ENCODE measurements at regions of chr17 and their contacts with region 1.

Region 1: DNA sequence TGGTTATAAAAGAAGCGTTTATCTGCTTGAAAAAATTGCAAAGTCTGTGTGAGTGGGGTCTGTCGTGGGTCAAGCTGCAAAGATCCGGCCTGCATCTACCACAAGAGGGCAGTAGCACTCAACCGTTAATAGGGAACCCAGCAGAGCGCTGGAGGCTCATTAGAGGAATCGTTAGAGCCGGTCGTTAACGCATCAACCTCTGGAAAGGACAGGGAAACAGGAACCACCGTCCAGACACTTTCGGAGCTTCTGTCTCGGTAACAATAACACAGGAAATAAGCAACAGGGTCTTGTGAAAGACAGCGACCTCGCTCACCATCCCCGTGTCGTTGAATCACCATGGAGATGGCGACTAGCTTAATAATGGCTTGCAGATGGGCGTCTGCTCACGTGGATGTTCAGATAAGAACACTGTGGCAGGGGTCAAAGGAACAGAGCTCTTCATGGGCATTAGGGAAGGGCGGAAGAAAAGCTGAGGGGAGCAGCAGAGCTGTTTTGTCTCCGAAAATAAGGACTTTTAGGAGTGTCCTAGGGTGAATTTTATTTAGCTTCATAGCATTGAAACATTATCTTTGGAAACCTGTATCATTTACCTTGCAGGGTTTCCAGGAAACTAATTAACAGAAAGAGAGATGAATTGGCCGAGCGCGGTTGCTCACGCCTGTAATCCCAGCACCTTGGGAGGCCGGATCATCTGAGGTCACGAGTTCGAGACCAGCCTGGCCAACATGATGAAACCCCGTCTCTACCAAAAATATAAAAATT is 11.9 kb upstream of the NSRP1 start:
- DNase-seq: peak; percentile 85
- H3K4me3 ChIP-seq: peak overlapping the region in 2 of 3 experiments; percentile 24 to 57
- H3K27ac ChIP-seq: no peak overlapping the region
- H3K4me1 ChIP-seq: peaks cover 5% of the 10 kb centered on the region
- H3K27me3 ChIP-seq: no peaks in the 10 kb centered on the region
- CTCF ChIP-seq: peak; percentile 88 to 96
- POLR2A ChIP-seq: no peak

Region 2: GRCh38 chr17:30093463-30094147 is 11.2 kb before region 1 on chr17:
- CTCF ChIA-PET with region 1: interaction called, 39 read pairs
- POLR2A ChIA-PET with region 1: no interaction called
- dilution Hi-C with region 1: no loop called
- intact Hi-C with region 1: no loop called
- DNase-seq: peak; percentile 72
- H3K4me3 ChIP-seq: no peak overlapping the region
- H3K27ac ChIP-seq: no peak overlapping the region
- H3K4me1 ChIP-seq: no peaks in the 10 kb centered on the region
- H3K27me3 ChIP-seq: no peaks in the 10 kb centered on the region
- CTCF ChIP-seq: peak; percentile 52 to 80
- POLR2A ChIP-seq: no peak

Region 3: GRCh38 chr17:30124273-30124796 is 19.6 kb after region 1 on chr17:
- CTCF ChIA-PET with region 1: interaction called, 50 read pairs
- POLR2A ChIA-PET with region 1: no interaction called
- dilution Hi-C with region 1: no loop called
- intact Hi-C with region 1: no loop called
- DNase-seq: no peak
- H3K4me3 ChIP-seq: no peak overlapping the region
- H3K27ac ChIP-seq: no peak overlapping the region
- H3K4me1 ChIP-seq: peaks cover 4% of the 10 kb centered on the region
- H3K27me3 ChIP-seq: no peaks in the 10 kb centered on the region
- CTCF ChIP-seq: no peak
- POLR2A ChIP-seq: no peak

Region 4: DNA sequence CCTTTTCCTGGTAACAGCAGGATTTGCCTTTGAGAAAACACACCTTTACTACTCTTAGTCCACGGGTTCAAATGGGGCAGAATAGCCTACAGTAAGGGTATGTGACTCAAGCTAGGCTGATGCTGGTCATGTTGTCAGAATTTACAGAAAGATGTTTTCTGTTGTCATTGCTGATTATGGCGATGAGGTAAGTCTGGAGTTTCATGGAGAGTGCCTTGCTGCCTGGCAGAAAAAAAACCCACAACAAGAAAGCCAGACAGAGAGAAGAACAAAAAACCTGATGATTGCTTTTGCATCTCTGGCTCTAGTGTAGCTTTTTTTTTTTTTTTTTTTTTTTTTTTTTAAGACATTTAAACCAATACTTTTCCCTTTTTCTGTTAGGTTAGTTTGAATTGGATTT is 82.8 kb after region 1 on chr17:
- CTCF ChIA-PET with region 1: interaction called, 13 read pairs
- POLR2A ChIA-PET with region 1: no interaction called
- dilution Hi-C with region 1: no loop called
- intact Hi-C with region 1: no loop called
- DNase-seq: no peak
- H3K4me3 ChIP-seq: no peak overlapping the region
- H3K27ac ChIP-seq: no peak overlapping the region
- H3K4me1 ChIP-seq: no peaks in the 10 kb centered on the region
- H3K27me3 ChIP-seq: no peaks in the 10 kb centered on the region
- CTCF ChIP-seq: no peak
- POLR2A ChIP-seq: no peak

Region 5: DNA sequence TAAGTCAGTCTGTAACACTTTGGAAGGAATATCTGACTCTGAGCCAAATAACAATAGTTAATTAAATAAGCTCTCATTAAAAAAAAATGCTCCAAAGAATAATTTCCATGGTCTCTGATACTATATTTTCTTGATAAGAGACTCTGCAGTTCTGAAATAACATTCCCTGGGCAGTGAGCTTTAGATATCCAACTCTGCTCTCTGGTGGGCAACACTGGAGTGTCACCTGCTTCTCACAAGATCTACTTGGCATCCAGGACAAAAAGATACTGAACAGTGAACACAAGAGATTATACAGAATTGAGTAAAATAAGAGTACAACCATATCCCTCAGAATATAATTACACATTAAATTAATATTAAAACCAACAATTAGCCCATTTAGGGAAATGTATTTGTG is 173.3 kb after region 1 on chr17:
- CTCF ChIA-PET with region 1: interaction called, 73 read pairs
- POLR2A ChIA-PET with region 1: no interaction called
- dilution Hi-C with region 1: no loop called
- intact Hi-C with region 1: loop called (anchors 1 kb)
- DNase-seq: peak; percentile 85
- H3K4me3 ChIP-seq: no peak overlapping the region
- H3K27ac ChIP-seq: no peak overlapping the region
- H3K4me1 ChIP-seq: no peaks in the 10 kb centered on the region
- H3K27me3 ChIP-seq: no peaks in the 10 kb centered on the region
- CTCF ChIP-seq: peak; percentile 46 to 55
- POLR2A ChIP-seq: no peak

Region 6: DNA sequence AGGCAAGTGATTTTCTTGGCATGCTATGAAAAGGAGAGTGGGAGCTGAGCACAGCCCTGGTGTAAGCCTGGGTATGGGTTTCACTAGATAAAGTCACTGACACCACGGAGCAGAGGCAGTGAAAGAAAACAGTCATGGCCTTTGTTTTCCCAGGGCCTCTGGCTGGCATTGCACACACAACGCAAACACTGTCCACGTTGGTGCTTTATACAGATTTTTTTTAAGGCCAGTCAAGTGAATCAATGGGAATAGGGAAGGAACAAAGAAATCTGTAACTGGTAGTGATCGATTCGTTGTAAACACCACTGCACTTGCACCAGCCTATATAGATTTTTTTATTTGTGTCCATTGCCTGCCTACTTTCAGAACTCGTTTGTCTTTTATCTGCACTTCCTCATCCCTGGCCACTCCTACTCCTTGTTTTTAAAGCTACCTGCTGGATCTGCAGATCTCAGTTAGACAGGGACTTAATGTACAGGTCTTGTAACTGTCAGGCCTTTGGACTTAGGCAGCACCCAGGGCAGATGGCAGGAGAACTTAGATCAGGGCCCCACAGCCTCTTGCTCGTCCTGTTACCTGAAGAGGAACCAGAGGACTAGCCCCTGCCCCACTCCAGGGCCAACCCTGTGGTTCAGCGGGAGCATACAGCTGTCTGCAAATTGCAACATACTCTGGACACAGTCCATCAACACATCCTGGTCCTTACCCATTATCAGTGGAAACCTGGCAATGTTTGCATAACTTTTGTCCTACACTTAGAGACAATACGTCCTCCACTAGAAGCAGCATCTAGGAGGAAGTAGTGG is 239.7 kb after region 1 on chr17:
- CTCF ChIA-PET with region 1: interaction called, 25 read pairs
- POLR2A ChIA-PET with region 1: no interaction called
- dilution Hi-C with region 1: no loop called
- intact Hi-C with region 1: loop called (anchors 1 kb)
- DNase-seq: peak; percentile 68
- H3K4me3 ChIP-seq: no peak overlapping the region
- H3K27ac ChIP-seq: no peak overlapping the region
- H3K4me1 ChIP-seq: peaks cover 26% of the 10 kb centered on the region
- H3K27me3 ChIP-seq: no peaks in the 10 kb centered on the region
- CTCF ChIP-seq: no peak
- POLR2A ChIP-seq: no peak

Measured in endothelial cell of umbilical vein (primary cell).